ENCODE measurements at regions of chr3 and their contacts with region 1.

Region 1: DNA sequence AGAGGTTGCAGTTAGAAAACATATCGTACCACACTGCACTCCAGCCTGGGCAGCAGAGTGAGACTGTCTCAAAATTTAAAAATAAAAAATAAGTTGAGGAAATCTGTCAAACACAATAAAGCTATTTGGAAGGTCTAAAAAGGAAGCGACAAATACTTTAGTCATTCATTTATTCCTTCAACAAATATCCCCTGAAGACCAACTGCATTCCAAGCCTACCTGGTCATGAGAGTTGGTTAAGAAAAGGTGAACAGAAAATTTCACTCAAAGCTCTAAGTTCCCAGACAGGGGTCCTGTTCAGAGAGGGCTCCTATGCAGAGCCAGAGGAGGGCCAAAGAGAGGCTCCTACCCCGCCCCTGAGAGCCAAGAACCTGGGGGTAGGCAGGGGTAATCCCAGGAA is 15.4 kb upstream of the PRKAR2A start:
- DNase-seq: no peak
- ATAC-seq: no peak
- H3K4me3 Mint-ChIP-seq: no peak overlapping the region
- H3K27ac Mint-ChIP-seq: no peak overlapping the region
- H3K4me1 Mint-ChIP-seq: no peaks in the 10 kb centered on the region
- H3K27me3 Mint-ChIP-seq: no peaks in the 10 kb centered on the region

Region 2: DNA sequence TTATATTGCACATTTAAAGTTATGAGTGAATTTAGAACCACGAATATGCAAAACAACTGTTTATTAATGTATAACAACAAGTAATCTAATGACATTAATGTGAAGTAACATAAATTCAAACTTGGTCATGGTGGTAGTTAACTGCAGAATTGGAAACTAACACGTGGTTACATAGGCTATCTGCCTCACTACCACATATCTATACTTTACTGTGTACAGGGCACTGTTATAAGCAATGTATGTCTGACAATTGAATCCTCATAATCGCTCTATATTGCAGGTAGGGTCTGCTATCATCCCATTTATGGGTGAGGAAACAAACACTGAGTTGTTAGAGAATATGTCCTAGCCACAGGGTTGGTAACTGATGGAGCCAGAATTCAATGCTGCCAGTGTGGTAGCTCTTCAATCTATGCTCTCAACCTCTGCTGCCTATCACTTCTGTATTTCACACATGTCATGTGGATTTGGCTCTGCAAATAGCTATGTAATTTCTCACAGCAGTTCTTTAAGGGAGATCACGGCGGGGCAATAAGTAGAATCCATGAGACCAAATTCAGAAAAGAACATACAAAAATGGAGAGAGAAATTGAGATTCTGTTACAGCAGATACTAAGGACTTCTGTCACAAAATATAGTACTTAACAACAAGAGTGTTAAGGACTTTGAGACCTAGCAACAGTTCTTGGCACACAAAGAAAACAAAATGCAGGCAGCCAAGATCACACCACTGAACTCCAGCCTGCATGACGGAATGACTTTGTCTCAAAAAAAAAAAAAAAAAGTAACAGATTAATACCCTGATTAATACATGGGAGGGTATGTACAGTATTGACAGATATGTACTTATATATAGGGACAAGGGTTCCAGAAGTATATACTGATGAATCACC is 1184.4 kb before region 1 on chr3:
- CTCF ChIA-PET with region 1: no interaction called
- POLR2A ChIA-PET with region 1: no interaction called
- intact Hi-C with region 1: no loop called
- DNase-seq: no peak
- ATAC-seq: no peak
- H3K4me3 Mint-ChIP-seq: no peak overlapping the region
- H3K27ac Mint-ChIP-seq: no peak overlapping the region
- H3K4me1 Mint-ChIP-seq: no peaks in the 10 kb centered on the region
- H3K27me3 Mint-ChIP-seq: no peaks in the 10 kb centered on the region

Region 3: GRCh38 chr3:48776854-48777253 is 86.3 kb before region 1 on chr3:
- CTCF ChIA-PET with region 1: no interaction called
- POLR2A ChIA-PET with region 1: no interaction called
- intact Hi-C with region 1: no loop called
- DNase-seq: no peak
- ATAC-seq: no peak
- H3K4me3 Mint-ChIP-seq: no peak overlapping the region
- H3K27ac Mint-ChIP-seq: no peak overlapping the region
- H3K4me1 Mint-ChIP-seq: no peaks in the 10 kb centered on the region
- H3K27me3 Mint-ChIP-seq: no peaks in the 10 kb centered on the region

Region 4: GRCh38 chr3:48891606-48892005 is 28.5 kb after region 1 on chr3:
- CTCF ChIA-PET with region 1: no interaction called
- POLR2A ChIA-PET with region 1: no interaction called
- intact Hi-C with region 1: no loop called
- DNase-seq: no peak
- ATAC-seq: no peak
- H3K4me3 Mint-ChIP-seq: no peak overlapping the region
- H3K27ac Mint-ChIP-seq: no peak overlapping the region
- H3K4me1 Mint-ChIP-seq: peaks cover under 1% of the 10 kb centered on the region
- H3K27me3 Mint-ChIP-seq: no peaks in the 10 kb centered on the region

Region 5: DNA sequence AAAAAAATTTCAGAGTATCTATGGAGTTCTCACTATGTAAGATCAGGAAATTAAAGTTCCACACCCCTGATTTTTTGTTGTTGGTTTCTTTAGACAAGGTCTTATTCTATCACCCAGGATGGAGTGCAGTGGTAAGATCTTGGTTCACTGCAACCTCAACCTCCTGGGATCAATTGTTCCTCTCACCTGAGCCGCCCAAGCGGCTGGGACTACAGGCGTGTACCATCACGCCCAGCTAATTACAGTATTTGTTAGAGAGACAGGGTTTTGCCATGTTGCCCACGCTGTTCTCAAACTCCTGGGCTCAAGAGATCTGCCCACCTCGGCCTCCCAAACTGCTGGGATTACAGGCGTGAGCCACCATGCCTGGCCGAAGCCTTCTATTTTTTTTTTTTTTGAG is 218.3 kb after region 1 on chr3:
- CTCF ChIA-PET with region 1: no interaction called
- POLR2A ChIA-PET with region 1: interaction called, 11 read pairs
- intact Hi-C with region 1: no loop called
- DNase-seq: no peak
- ATAC-seq: no peak
- H3K4me3 Mint-ChIP-seq: no peak overlapping the region
- H3K27ac Mint-ChIP-seq: no peak overlapping the region
- H3K4me1 Mint-ChIP-seq: peaks cover 11% of the 10 kb centered on the region
- H3K27me3 Mint-ChIP-seq: no peaks in the 10 kb centered on the region

Measured in activated CD4-positive, alpha-beta T cell treated with anti-CD3 and anti-CD28 coated beads for 36 hours (primary cell).